ENCODE measurements at regions of chr19 and their contacts with region 1.

Region 1: DNA sequence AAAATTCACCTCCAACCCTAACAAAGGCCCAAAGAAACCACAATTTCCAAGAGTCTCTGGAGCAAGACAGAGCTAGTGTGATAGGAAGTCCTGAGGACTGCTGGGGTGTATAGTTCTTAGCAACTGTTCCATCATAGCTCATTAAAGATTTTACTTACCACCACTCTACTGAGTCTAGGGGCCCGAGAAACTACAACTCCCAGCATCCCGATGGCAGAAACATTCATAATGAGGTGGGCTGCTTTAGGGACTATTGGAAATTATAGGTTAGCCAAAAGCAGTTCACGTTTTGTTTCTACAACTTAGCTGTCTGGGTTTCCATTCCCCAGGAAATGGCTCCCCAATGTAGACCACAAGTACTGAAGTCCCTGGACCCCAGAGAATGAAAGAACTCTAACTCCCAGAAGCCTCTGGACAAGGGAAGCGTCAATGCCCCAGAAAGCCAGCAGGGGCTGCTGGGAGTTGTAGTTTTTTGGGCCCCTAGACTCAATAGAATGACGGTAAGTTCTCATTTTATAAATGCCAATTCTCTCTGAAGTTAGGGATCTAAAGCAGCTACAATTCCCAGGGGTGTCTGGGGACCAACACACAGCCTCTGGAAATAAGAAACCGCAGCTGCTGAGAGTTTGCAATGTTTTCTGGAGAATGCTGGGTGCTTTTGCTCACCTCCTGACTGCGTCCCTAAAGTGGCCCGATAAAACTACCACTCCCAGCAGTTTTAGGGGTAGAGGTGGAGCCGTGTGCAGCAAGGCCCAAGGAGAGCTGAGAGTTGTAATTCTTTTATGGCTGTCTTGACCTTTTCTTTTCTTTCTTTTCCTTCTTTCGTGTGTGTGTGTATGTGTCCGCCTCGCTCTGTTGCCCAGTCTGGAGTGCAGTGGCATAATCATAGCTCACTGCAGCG is 11.1 kb downstream of the FTL start:
- DNase-seq: no peak
- H3K4me3 ChIP-seq: no peak overlapping the region
- CTCF ChIP-seq: no peak

Region 2: GRCh38 chr19:48987423-48987722 is 11.2 kb after region 1 on chr19:
- CTCF ChIA-PET with region 1: interaction called, 128 read pairs
- POLR2A ChIA-PET with region 1: no interaction called
- DNase-seq: no peak
- H3K4me3 ChIP-seq: no peak overlapping the region
- CTCF ChIP-seq: no peak